Activated CD8-positive, alpha-beta T cell treated with anti-CD3 and anti-CD28 coated beads, Interleukin-2, amount 10 ng/mL, durations not matched to agents 7 days and 5 days (primary cell): ENCODE measurements at regions of chr20 and their contacts with region 1.

Region 1: GRCh38 chr20:34312544-34313217 is 9.5 kb upstream of the AHCY start:
- DNase-seq: peak; percentile 93
- ATAC-seq: peak; percentile 100
- H3K4me3 Mint-ChIP-seq: peak overlapping the region; percentile 22
- H3K27ac Mint-ChIP-seq: no peak overlapping the region
- H3K4me1 Mint-ChIP-seq: peaks cover 21% of the 10 kb centered on the region
- H3K27me3 Mint-ChIP-seq: peaks cover 24% of the 10 kb centered on the region

Region 2: GRCh38 chr20:33859157-33859695 is 453.5 kb before region 1 on chr20:
- CTCF ChIA-PET with region 1: no interaction called
- POLR2A ChIA-PET with region 1: no interaction called
- DNase-seq: peak; percentile 77
- ATAC-seq: peak; percentile 84
- H3K4me3 Mint-ChIP-seq: peak overlapping the region; percentile 44
- H3K27ac Mint-ChIP-seq: peak overlapping the region; percentile 94
- H3K4me1 Mint-ChIP-seq: peaks cover 62% of the 10 kb centered on the region
- H3K27me3 Mint-ChIP-seq: no peaks in the 10 kb centered on the region

Region 3: DNA sequence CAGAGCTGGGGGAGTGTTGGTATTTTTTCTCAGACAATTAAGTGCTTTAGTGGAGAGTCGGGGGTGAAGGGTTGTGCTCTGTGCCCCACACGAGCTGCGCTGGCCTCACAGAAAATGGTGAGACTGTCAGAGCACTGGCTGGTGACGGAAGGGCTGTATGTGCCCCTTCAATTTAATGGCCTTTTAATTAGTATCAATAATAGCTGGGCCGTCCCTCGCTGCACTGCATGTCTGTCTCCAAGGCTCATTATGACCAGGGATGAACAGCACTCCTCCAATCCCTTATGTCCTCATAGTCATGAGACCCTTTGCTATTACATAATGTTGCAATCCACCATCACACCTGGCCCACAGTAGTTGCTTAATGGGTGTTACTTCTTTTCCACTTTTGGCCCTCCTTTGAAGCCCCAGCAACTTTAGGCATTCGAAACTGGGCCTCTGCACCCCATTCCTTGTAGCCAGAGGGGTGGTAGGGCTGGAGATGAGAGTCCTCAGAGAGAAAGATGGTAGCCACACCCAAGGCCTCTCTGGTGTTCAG is 328.4 kb before region 1 on chr20:
- CTCF ChIA-PET with region 1: no interaction called
- POLR2A ChIA-PET with region 1: no interaction called
- DNase-seq: no peak
- ATAC-seq: no peak
- H3K4me3 Mint-ChIP-seq: no peak overlapping the region
- H3K27ac Mint-ChIP-seq: no peak overlapping the region
- H3K4me1 Mint-ChIP-seq: no peaks in the 10 kb centered on the region
- H3K27me3 Mint-ChIP-seq: peaks cover 6% of the 10 kb centered on the region

Region 4: DNA sequence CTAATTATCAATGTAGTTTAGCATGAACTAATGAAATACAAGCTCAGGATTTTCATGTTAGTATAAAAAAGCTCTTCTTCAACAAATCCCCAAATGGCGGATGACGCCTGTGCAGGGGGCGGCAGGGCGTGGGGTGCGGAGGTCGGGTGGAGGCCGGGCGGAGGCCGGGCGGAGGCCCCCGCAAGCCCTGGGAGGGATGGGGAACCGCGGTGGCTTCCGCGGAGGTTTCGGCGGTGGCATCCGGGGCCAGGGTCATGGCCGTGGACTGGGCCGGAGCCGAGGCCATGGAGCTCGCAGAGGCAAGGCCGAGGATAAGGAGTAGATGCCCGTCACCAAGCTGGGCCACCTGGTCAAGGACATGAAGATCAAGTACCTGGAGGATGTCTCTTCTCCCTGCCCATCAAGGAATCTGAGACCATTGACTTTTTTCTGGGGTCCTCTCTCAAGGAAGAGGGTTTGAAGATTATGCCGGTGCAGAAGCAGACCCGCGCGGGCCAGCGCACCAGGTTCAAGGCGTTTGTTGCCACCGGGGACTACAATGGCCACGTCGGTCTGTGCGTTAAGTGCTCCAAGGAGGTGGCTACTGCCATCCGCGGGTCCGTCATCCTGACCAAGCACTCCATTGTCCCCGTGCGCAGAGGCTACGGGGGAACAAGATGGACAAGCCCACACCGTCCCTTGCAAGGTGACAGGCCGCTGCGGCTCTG is 190.3 kb before region 1 on chr20:
- CTCF ChIA-PET with region 1: no interaction called
- POLR2A ChIA-PET with region 1: no interaction called
- DNase-seq: no peak
- ATAC-seq: no peak
- H3K4me3 Mint-ChIP-seq: no peak overlapping the region
- H3K27ac Mint-ChIP-seq: no peak overlapping the region
- H3K4me1 Mint-ChIP-seq: peaks cover 11% of the 10 kb centered on the region
- H3K27me3 Mint-ChIP-seq: peaks cover 19% of the 10 kb centered on the region

Region 5: GRCh38 chr20:34210271-34210670 is 102.4 kb before region 1 on chr20:
- CTCF ChIA-PET with region 1: no interaction called
- POLR2A ChIA-PET with region 1: no interaction called
- DNase-seq: no peak
- ATAC-seq: no peak
- H3K4me3 Mint-ChIP-seq: no peak overlapping the region
- H3K27ac Mint-ChIP-seq: no peak overlapping the region
- H3K4me1 Mint-ChIP-seq: no peaks in the 10 kb centered on the region
- H3K27me3 Mint-ChIP-seq: peaks cover 3% of the 10 kb centered on the region

Region 6: DNA sequence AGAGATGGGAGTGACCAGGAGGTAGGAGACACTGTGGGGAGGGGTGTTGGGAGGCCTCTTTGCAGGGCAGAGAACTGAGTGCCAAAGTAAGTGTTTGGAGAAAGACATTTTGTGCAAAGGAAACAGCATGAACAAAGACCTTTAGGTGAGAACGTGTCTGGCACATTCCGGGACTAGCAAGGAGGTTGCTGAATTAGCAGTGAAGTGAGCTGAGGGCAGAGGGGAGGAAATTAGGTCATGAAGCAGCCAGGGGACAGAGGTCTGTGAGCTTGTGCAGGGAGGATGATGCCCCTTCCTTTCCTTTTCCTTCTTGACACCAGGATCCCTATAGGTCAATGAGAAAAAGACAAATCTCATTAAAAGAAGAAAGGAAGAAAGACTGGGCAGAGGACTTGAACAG is 11.9 kb after region 1 on chr20:
- CTCF ChIA-PET with region 1: interaction called, 20 read pairs
- POLR2A ChIA-PET with region 1: no interaction called
- DNase-seq: no peak
- ATAC-seq: no peak
- H3K4me3 Mint-ChIP-seq: no peak overlapping the region
- H3K27ac Mint-ChIP-seq: no peak overlapping the region
- H3K4me1 Mint-ChIP-seq: no peaks in the 10 kb centered on the region
- H3K27me3 Mint-ChIP-seq: peaks cover 16% of the 10 kb centered on the region

Region 7: DNA sequence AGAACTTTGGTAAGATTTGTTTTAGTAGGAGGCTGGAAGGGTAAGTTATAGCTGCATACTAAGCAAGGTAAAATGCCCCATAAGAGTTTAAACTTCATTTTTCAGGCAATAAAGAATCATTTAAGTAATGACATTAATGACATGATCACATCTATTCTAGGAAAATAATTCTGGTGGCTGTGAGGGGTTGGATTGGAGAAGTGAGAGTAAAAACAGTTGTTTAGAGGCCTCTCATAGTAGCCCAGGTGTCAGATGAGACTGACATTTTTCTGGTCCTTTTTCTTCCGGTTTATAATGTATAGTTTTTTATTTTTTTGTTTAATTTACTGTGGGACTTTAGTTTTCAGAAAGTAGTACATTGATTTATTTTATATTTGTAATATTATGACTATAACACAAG is 91.2 kb after region 1 on chr20:
- CTCF ChIA-PET with region 1: interaction called, 26 read pairs
- POLR2A ChIA-PET with region 1: interaction called, 4 read pairs
- DNase-seq: no peak
- ATAC-seq: no peak
- H3K4me3 Mint-ChIP-seq: no peak overlapping the region
- H3K27ac Mint-ChIP-seq: peak overlapping the region; percentile 22
- H3K4me1 Mint-ChIP-seq: peaks cover 44% of the 10 kb centered on the region
- H3K27me3 Mint-ChIP-seq: no peaks in the 10 kb centered on the region

Region 8: DNA sequence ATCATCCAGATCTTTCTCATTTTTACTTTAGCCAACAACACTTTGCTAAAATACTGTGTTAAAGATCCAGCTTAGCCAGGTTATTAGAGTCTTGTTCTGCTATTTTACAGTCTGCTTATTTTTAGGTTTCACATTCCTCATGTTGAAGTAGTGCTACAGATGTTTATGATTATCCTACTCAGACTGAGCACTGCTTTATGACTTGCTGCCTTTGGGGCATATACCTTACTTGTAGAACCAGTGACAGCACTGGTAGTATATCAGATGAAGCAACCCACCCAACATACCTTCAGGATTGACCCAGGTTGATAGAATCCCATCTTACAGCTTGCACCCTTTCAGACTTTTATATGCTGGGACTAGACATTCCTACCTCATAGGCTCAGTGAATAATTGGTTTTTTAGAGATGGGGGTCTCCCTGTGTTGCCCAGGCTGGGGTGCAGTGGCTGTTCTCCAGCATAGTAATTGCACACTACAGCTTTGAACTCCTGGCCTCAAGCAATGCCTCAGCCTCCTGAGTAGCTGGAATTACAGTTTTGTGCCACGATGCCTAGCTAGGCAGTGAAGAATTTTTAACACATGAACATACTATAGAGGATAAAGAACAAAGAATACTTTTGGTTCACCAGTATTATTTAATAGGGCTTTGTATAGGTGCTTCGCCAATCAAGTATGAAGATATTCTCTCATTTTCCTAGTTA is 139.8 kb after region 1 on chr20:
- CTCF ChIA-PET with region 1: interaction called, 19 read pairs
- POLR2A ChIA-PET with region 1: interaction called, 4 read pairs
- DNase-seq: no peak
- ATAC-seq: no peak
- H3K4me3 Mint-ChIP-seq: no peak overlapping the region
- H3K27ac Mint-ChIP-seq: peak overlapping the region; percentile 22
- H3K4me1 Mint-ChIP-seq: no peaks in the 10 kb centered on the region
- H3K27me3 Mint-ChIP-seq: no peaks in the 10 kb centered on the region

Region 9: DNA sequence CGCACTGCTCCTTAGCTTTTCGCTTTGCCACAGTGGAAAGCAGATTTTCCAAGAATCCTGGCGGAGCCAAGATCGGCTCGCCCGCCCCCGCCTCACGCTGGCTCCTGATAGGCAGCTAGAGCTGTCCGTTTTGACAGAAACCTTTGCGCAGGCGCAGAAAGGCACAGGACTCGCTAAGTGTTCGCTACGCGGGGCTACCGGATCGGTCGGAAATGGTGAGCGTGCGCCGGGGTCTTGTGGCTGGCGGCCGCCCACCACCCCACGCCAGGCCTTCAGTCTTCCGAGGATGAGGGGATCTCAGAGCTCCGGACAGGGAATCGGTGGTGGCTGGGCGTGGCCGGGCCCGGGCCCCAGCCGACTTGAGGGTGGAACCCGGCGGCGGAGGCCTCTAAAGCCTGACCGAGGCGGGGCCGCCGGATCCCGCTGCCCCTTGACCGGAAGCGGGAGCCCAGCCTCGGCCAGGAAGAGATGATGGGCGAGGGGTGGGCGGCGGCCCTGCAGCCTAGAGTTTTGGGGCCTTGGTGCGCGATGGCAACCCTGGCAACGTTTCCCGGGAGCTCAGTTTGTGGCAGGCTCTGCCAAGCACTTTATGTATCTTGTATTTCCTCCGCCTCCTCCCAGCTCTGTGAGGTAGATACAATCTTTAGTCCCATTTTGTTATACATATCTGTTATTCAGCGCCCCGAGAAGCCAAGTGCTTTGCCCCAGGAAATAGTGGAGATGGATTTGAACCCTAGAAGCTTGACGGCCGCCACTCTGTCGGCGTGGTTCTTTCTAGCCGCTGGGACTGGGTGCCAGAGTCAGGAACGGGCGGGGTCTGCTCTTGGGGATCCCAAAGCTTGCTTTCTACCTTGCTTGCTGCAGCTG is 203.8 kb after region 1 on chr20 and contains the start of gene DYNLRB1:
- CTCF ChIA-PET with region 1: interaction called, 124 read pairs
- POLR2A ChIA-PET with region 1: interaction called, 4 read pairs
- DNase-seq: peak; percentile 97
- ATAC-seq: peak; percentile 88
- H3K4me3 Mint-ChIP-seq: peak within 1 kb of the TSS; percentile 98
- H3K27ac Mint-ChIP-seq: peak within 1 kb of the TSS; percentile 98
- H3K4me1 Mint-ChIP-seq: peaks cover 31% of the 10 kb centered on the region
- H3K27me3 Mint-ChIP-seq: no peaks in the 10 kb centered on the region
- total RNA-seq, gene DYNLRB1: 91.9 to 103 TPM

Region 10: DNA sequence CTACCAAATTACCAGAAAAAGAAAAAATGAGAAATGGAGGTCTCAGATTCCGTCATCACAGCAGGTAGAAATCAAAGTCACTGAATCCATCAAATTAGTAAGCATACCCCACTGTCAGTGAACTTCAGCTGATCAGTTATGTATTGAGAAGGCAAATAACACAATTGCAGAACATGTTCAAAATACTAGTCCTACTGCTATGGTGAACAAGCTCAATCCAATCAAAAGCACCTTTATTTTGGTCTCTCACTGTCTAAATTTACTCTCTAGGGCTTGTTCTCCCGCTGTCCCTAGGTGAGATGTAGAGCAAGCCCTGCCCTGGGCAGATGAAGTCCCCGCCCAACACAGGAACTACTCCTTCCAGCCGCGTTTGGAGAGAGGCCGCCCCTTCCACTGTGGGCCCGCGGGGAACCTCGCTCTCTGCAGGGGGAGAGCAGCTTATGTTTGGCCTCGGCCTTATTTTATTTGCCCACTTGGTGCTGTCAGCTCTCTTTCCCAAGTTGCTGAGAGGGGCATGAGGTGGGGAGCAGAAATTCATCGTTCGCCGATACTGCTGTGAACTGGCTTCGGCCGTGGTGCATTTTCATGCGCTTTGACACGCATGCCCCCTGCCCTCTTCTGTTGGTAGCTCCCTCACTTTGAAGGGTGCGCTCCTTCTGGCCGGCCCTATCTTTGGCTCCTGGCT is 231.6 kb after region 1 on chr20:
- CTCF ChIA-PET with region 1: interaction called, 19 read pairs
- POLR2A ChIA-PET with region 1: no interaction called
- DNase-seq: peak; percentile 40
- ATAC-seq: peak; percentile 83
- H3K4me3 Mint-ChIP-seq: no peak overlapping the region
- H3K27ac Mint-ChIP-seq: no peak overlapping the region
- H3K4me1 Mint-ChIP-seq: peaks cover 9% of the 10 kb centered on the region
- H3K27me3 Mint-ChIP-seq: no peaks in the 10 kb centered on the region